Common myeloid progenitor, CD34-positive (primary cell): ENCODE measurements at regions of chr11 and their contacts with region 1.

Region 1: DNA sequence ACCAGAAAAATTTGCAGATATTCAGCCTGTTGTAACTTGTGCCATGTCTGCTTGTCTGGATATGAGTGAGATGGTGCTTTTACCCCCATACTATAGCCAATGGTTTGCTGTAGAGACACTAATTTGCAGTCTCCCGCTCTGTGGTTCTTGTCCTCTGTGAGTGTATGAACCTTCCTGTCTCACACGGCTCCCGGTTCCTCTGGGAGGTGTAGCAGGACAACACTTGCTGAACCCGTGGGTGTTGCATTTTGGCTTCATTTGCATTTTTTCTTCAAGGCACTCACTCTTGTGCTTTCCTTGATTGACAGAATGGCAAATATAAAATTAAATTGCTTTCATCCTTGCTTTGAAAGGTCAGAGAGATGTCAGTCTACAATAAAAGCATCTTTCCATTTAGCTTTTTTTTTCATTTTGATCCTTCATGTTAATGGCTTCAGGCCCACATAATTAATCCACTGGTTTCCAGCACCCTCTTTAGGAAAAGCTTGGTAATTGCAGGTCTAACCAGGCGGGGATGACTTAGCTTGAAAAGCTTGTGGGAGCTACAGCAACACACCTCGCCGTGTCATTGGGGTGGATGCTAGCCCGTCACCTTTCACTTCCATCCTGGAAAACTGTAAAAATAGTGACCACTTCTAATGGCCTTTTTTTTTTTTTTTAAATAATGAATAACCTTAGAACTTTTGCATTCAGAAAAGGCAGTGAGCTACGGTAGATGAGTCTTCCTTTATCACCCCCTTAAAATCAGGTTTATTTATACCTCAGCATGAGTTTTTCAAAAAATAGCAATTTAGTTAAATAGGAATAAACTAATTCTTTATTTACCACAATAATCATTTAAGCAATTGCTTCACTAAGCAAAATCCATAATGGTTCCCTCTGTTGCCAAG is 27.4 kb upstream of the ST14 start:
- DNase-seq: peak; percentile 75 to 87 (median 83)
- H3K4me3 ChIP-seq: no peak overlapping the region
- H3K27ac ChIP-seq: no peak overlapping the region
- H3K4me1 ChIP-seq: no peaks in the 10 kb centered on the region
- H3K27me3 ChIP-seq: no peaks in the 10 kb centered on the region

Region 2: GRCh38 chr11:129881570-129882170 is 250.5 kb before region 1 on chr11:
- CTCF ChIA-PET with region 1: interaction called, 130 read pairs
- POLR2A ChIA-PET with region 1: no interaction called
- DNase-seq: peak; percentile 40 to 63 (median 55)
- H3K4me3 ChIP-seq: no peak overlapping the region
- H3K27ac ChIP-seq: no peak overlapping the region
- H3K4me1 ChIP-seq: no peaks in the 10 kb centered on the region
- H3K27me3 ChIP-seq: no peaks in the 10 kb centered on the region

Region 3: GRCh38 chr11:129930296-129930695 is 201.9 kb before region 1 on chr11:
- CTCF ChIA-PET with region 1: interaction called, 150 read pairs
- POLR2A ChIA-PET with region 1: no interaction called
- DNase-seq: peak in 1 of 3 donors; percentile 30
- H3K4me3 ChIP-seq: no peak overlapping the region
- H3K27ac ChIP-seq: no peak overlapping the region
- H3K4me1 ChIP-seq: peaks cover 0 to 9% (median 5%) of the 10 kb centered on the region in 4 experiments
- H3K27me3 ChIP-seq: no peaks in the 10 kb centered on the region

Region 4: GRCh38 chr11:130069684-130070108 is 62.5 kb before region 1 on chr11 and contains the start of gene APLP2:
- CTCF ChIA-PET with region 1: interaction called, 16 read pairs
- POLR2A ChIA-PET with region 1: no interaction called
- DNase-seq: peak; percentile 98 to 99 (median 99)
- H3K4me3 ChIP-seq: peak within 1 kb of the TSS; percentile 75 to 99 (median 89)
- H3K27ac ChIP-seq: peak within 1 kb of the TSS; percentile 74 to 82
- H3K4me1 ChIP-seq: peaks cover under 1 to 35% (median 28%) of the 10 kb centered on the region in 4 experiments
- H3K27me3 ChIP-seq: no peaks in the 10 kb centered on the region

Region 5: DNA sequence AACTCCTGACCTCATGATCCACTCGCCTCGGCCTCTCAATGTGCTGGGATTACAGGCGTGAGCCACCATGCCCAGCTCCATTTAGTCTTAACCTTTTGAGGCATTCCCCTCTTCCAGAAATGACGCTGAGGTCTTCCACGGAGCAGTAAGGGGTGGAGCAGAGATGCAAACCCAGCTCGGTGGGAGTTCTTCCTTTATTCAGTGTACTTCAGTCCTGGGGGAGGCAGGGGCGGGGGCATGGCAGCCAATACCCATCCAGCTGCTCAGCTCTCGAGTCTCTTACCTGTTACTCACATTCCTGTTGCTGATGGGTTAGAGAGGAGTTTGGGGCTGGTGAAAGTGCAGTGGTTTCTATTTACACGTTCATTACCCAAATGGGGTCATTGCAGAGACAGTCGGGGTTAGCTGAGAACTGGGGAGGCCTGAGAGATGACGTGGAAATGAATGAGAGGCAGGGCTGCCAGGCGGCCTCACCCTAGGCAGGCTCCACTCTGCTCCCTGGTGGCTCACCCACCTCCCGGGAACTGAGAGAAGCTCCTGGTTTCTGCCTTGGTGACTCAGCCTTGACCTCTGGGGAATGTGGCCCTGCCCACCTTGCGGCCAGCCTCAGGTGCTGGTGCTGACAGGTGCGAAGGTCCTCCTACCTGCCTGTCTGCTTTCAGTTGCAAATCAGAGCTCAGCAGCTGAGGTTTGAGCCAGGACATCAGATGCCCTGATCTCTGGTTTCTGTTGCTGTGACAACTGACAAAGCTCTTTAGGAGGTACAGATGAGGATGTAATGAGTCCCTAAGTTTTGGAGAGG is 14.0 kb after region 1 on chr11:
- CTCF ChIA-PET with region 1: interaction called, 14 read pairs
- POLR2A ChIA-PET with region 1: no interaction called
- DNase-seq: no peak
- H3K4me3 ChIP-seq: no peak overlapping the region
- H3K27ac ChIP-seq: no peak overlapping the region
- H3K4me1 ChIP-seq: peaks cover 3 to 26% (median 14%) of the 10 kb centered on the region in 4 experiments
- H3K27me3 ChIP-seq: no peaks in the 10 kb centered on the region